Mammary epithelial cell (primary cell): ENCODE measurements at regions of chr1 and their contacts with region 1.

Region 1: DNA sequence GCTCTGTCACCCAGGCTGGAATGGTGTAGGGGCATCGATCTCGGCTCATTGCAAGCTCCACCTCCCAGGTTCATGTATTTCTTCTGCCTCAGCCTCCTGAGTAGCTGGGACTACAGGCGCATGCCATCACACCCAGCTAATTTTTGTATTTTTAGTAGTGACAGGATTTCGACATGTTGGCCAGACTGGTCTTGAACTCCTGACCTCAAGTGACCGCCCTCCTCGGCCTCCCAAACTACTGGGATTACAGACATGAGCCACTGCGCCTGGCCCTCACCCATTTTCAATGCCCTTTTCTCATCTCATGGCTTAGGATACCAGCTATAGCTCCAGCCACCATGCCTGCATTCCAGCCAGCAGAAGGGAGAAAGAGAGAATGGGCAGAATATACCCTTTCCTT is 12.9 kb upstream of the SOX13 start:
- DNase-seq: no peak
- H3K4me3 ChIP-seq: no peak overlapping the region
- H3K27ac ChIP-seq: no peak overlapping the region
- H3K4me1 ChIP-seq: peaks cover 26% of the 10 kb centered on the region
- H3K27me3 ChIP-seq: no peaks in the 10 kb centered on the region
- CTCF ChIP-seq: no peak

Region 2: GRCh38 chr1:202728951-202729350 is 1331.0 kb before region 1 on chr1:
- CTCF ChIA-PET with region 1: interaction called, 34 read pairs
- dilution Hi-C with region 1: no loop called
- in situ Hi-C with region 1: no loop called
- intact Hi-C with region 1: no loop called
- DNase-seq: no peak
- H3K4me3 ChIP-seq: no peak overlapping the region
- H3K27ac ChIP-seq: no peak overlapping the region
- H3K4me1 ChIP-seq: no peaks in the 10 kb centered on the region
- H3K27me3 ChIP-seq: no peaks in the 10 kb centered on the region
- CTCF ChIP-seq: no peak

Region 3: DNA sequence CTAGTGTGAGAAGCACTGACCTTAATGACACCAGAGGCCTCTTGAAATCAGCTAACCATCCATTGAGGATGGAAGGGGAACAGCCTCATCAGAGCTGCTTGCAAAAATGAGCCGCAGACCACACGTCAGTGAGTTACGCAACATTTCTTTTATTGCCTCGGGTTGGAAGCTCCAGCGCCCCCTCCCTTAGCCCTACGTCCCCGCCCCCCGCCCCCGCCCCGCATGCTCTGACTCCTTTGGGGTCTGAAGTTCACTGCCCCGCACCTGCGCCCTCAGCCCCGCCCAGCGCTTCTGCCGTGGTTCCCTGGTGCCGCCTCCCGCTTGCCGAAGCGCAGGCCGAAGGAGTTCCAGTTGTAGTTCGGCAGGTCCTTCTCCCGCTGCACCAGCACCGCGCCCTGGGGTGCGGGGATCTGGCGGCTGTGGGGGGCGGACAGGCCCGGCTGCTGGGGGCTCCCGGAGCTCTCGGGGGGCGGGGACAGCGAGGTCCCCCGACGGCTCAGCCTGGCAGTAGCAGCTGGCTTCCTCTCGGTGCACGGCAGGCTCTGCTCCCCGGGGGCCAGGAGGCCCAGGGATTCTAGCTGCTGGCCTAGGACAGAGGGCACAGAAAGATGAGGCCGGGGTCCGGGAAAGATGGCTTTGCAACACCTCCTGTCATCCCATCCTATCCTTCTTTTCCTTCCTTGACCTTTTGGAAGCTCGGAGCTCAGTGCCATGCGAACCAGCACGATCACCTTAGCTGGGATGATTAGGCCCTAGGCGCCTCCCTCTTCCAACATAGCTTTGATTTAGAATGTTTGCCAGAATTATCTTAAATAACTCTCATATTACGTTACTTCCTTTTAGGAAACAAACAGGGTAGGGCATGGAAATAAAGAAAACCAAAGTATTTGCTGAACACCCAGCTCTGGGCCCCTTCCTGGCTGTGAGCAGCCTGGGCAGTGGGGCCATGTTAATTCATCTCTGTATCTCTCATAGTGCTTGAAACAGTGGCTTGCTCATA is 130.5 kb after region 1 on chr1:
- CTCF ChIA-PET with region 1: no interaction called
- dilution Hi-C with region 1: no loop called
- in situ Hi-C with region 1: no loop called
- intact Hi-C with region 1: no loop called
- DNase-seq: no peak
- H3K4me3 ChIP-seq: no peak overlapping the region
- H3K27ac ChIP-seq: no peak overlapping the region
- H3K4me1 ChIP-seq: peaks cover 11% of the 10 kb centered on the region
- H3K27me3 ChIP-seq: no peaks in the 10 kb centered on the region
- CTCF ChIP-seq: no peak

Region 4: GRCh38 chr1:204319491-204319907 is 259.5 kb after region 1 on chr1:
- CTCF ChIA-PET with region 1: no interaction called
- dilution Hi-C with region 1: no loop called
- in situ Hi-C with region 1: no loop called
- intact Hi-C with region 1: no loop called
- DNase-seq: peak; percentile 91
- H3K4me3 ChIP-seq: no peak overlapping the region
- H3K27ac ChIP-seq: peak overlapping the region; percentile 75
- H3K4me1 ChIP-seq: peaks cover 45% of the 10 kb centered on the region
- H3K27me3 ChIP-seq: no peaks in the 10 kb centered on the region
- CTCF ChIP-seq: no peak